Activated CD4-positive, alpha-beta T cell treated with anti-CD3 and anti-CD28 coated beads for 36 hours (primary cell): ENCODE measurements at regions of chr1 and their contacts with region 1.

Region 1: DNA sequence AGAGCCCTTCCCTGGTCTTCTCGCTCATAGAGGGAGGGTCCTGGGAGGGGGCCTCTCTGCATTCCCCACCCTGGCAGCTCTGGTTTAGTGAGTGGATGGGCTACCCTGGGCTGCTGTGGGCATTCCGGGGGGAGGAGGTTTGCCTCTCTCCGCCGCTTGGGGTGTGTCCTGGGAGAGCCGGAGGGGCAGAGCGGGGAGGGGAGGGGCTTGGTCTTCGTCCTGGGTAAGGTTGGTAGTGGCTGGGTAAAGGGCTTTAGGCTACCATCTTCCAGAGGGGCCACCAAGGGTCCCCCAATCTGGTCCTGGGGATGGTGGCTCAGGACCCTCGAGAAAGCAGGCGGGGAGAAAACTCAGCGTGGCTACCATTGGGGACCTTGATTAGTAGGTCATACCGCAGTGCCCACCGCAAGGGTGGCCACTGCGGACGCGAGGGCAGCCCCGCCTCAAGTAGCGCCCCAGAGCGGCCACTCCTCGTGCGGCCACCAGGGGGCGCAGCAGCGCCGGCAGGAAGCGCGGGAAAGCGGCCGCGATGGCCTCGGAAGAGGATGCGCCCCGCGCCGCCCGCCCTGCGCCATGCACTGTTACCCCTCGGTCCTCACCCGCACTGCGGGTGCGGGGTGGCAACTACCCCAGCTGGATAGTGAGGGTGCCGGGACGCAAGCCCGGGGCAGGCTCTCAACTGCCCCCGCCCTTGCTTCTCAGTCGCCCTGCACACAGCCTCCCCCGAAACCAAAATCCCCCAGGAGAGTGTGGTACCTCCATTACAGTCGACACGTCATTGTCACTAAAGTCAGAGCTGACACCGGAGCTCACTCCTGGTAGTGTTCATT is 44.1 kb upstream of the SLC25A33 start:
- DNase-seq: peak; percentile 84
- ATAC-seq: peak; percentile 90
- H3K4me3 Mint-ChIP-seq: peak overlapping the region; percentile 57
- H3K27ac Mint-ChIP-seq: no peak overlapping the region
- H3K4me1 Mint-ChIP-seq: peaks cover 7% of the 10 kb centered on the region
- H3K27me3 Mint-ChIP-seq: peaks cover 7% of the 10 kb centered on the region

Region 2: DNA sequence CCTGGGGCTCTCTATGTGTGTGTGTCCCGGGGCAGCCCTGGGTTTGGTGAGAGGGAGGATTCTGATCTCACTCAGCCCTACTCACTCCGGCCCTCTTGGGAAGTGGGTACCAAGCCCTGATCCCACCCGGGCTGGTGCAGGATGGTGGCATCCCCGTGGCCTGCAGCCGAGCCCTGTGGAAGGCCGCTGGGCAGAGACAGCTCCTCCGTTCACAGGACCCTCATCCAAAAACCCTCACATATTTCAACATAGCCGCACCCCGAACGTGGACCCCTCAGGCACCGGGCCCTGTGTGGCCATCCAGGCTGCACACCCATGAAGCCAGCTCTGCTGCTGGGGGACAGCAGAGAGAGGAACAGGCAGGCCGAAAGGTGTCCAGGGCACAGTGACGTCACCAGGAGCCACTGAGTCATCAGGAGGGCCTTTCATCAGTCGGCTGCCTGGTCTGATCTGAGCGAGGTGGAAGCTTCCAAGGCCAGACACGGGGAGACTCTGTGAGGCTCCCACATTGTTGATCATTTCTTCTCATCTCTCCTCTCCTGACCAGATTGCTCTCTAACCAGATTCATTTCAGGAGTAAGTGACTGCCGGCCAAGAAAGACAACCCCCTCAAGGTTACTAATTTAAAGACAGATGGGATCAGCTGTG is 350.0 kb before region 1 on chr1:
- CTCF ChIA-PET with region 1: interaction called, 3 read pairs
- POLR2A ChIA-PET with region 1: no interaction called
- intact Hi-C with region 1: loop called (anchors 1 kb)
- DNase-seq: peak; percentile 57
- ATAC-seq: peak; percentile 61
- H3K4me3 Mint-ChIP-seq: no peak overlapping the region
- H3K27ac Mint-ChIP-seq: no peak overlapping the region
- H3K4me1 Mint-ChIP-seq: peaks cover 3% of the 10 kb centered on the region
- H3K27me3 Mint-ChIP-seq: no peaks in the 10 kb centered on the region

Region 3: GRCh38 chr1:9269078-9269501 is 226.1 kb before region 1 on chr1:
- CTCF ChIA-PET with region 1: interaction called, 29 read pairs
- POLR2A ChIA-PET with region 1: no interaction called
- intact Hi-C with region 1: loop called (anchors 1 kb)
- DNase-seq: no peak
- ATAC-seq: no peak
- H3K4me3 Mint-ChIP-seq: no peak overlapping the region
- H3K27ac Mint-ChIP-seq: no peak overlapping the region
- H3K4me1 Mint-ChIP-seq: peaks cover 2% of the 10 kb centered on the region
- H3K27me3 Mint-ChIP-seq: no peaks in the 10 kb centered on the region

Region 4: DNA sequence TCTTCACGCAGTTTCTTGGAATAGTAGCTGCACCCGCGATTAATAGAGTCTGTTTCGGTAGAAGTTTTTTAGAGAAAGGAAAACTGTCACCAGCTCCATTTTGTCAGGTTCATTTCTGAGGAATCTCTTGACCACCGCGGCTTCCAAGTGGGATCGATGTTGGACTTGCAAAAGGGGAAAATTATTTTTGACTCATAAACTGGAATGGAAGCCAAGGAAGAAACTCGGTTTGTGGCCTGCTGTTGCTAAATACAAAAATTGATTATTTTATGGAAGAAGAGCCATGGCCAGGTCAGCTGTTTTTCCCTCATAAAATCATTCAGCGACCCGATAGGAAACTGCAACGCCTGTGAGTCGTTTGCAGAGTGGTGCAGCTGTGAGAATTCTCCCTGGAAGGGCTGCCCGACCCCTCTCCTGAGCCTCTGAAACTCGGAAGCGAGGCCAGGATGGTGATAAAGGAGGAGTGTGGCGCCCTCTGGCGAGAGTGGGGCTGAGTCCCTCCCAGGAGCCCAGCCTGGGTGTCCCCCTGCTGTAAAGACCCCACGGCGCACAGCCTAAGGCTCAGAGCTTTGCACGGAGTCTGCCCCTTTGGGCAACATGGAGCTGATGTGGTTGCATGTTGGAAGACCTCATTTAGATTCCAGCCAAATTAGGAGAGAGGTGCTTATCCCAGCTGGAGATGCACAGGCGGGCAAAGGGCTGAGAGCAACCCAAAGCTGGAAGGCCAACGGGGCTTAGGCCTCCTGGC is 39.5 kb before region 1 on chr1:
- CTCF ChIA-PET with region 1: interaction called, 3 read pairs
- POLR2A ChIA-PET with region 1: no interaction called
- intact Hi-C with region 1: loop called in 1 of 2 experiments (anchors 2 kb)
- DNase-seq: peak; percentile 84
- ATAC-seq: peak; percentile 80
- H3K4me3 Mint-ChIP-seq: no peak overlapping the region
- H3K27ac Mint-ChIP-seq: no peak overlapping the region
- H3K4me1 Mint-ChIP-seq: no peaks in the 10 kb centered on the region
- H3K27me3 Mint-ChIP-seq: no peaks in the 10 kb centered on the region

Region 5: GRCh38 chr1:9539165-9539828 is 44.2 kb after region 1 on chr1 and contains the start of gene SLC25A33:
- CTCF ChIA-PET with region 1: interaction called, 4 read pairs
- POLR2A ChIA-PET with region 1: no interaction called
- intact Hi-C with region 1: loop called in 1 of 2 experiments (anchors 1 kb)
- DNase-seq: peak; percentile 99
- ATAC-seq: peak; percentile 99
- H3K4me3 Mint-ChIP-seq: peak within 1 kb of the TSS; percentile 80
- H3K27ac Mint-ChIP-seq: peak within 1 kb of the TSS; percentile 78
- H3K4me1 Mint-ChIP-seq: peaks cover 30% of the 10 kb centered on the region
- H3K27me3 Mint-ChIP-seq: no peaks in the 10 kb centered on the region
- total RNA-seq, gene SLC25A33: 4.4 to 6.1 TPM

Region 6: GRCh38 chr1:9867408-9868243 is 372.5 kb after region 1 on chr1:
- CTCF ChIA-PET with region 1: interaction called, 7 read pairs
- POLR2A ChIA-PET with region 1: no interaction called
- intact Hi-C with region 1: loop called in 1 of 2 experiments (anchors 1 kb)
- DNase-seq: peak; percentile 93
- ATAC-seq: peak; percentile 99
- H3K4me3 Mint-ChIP-seq: no peak overlapping the region
- H3K27ac Mint-ChIP-seq: no peak overlapping the region
- H3K4me1 Mint-ChIP-seq: no peaks in the 10 kb centered on the region
- H3K27me3 Mint-ChIP-seq: no peaks in the 10 kb centered on the region